Natural killer cell (primary cell): ENCODE measurements at regions of chr14 and their contacts with region 1.

Region 1: DNA sequence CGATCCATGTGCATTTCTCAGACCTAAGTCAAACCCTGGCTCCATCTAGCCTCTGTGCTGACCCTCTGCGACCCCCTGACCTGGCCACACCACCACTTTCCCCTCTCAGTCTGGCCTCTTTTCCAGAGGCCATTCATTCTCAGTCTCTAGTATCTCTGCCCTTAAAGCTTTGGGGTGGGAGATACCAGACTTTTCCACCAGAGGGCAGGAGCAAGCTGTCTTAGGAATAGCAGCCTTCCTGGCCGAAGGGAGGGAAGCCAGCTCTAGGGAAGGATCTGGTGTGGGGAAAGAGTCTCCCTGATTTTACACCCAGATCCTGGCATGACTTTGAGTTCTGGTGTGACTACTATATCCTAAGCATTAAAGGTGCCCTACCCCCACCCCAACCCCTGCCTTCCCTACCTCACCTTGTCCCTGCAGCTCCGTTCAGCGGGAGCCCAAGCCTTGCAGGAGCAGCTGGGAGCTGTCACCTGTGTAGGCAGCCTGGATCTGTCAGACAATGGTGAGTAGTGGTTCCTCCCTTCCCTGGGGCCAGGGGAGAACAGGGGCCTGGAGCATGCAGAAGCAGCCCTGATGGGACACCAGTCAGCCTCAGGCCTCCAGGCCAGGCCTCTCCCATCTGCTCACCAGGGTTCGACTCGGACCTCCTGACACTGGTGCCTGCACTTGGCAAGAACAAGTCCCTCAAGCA is 6.6 kb downstream of the CARMIL3 start:
- DNase-seq: peak; percentile 27 to 54
- ATAC-seq: peak in 2 of 3 donors; percentile 70 to 73
- H3K4me3 ChIP-seq: no peak overlapping the region
- H3K4me3 Mint-ChIP-seq: no peak overlapping the region
- H3K27ac ChIP-seq: no peak overlapping the region
- H3K27ac Mint-ChIP-seq: peak overlapping the region in 1 of 2 donors; percentile 83
- H3K4me1 ChIP-seq: peaks cover 8% of the 10 kb centered on the region
- H3K4me1 Mint-ChIP-seq: peaks cover 2 to 30% of the 10 kb centered on the region in 2 donors
- H3K27me3 ChIP-seq: no peaks in the 10 kb centered on the region
- H3K27me3 Mint-ChIP-seq: peaks cover 0 to 2% of the 10 kb centered on the region in 2 donors
- CTCF ChIP-seq: peak; percentile 71

Region 2: DNA sequence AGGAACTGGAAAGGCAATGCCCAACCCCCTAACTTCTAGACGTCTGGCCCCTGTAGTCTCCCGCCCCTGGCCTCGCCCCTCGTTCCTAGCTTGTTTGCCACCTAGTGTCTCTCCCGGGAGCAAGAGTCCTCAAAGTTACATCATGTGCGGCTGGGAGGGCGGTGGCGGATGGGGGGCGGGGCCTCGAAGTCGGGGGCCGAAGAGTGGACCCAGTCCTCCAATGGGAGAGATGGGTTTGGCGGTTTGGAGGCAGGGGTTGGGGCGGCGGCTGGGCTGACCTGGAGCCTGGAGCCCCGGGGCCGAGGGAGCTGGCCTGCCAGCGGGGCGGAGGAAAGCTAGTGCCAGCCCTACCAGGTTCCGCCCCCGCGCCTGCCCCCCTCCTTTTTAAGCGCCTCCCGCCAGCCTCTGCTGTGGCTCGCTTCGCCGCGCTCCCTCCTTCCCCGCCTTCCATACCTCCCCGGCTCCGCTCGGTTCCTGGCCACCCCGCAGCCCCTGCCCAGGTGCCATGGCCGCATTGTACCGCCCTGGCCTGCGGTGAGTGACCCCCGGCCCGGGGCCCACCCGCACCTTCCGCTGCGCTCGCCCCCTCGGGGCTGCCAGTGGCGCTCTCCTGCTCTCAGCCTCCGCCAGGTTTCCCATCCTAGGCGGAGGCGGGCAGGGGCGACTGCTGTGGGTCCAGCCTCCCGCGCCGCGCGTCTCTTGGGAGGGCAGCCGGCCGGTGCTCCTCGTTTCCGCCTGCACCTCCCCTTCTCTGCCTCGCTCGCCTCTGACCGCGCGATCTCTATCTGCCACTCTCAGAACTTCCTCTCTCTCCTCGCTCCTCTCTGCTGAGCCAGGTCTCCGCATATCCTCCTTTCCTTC is 35.7 kb after region 1 on chr14 and contains the start of gene PCK2:
- intact Hi-C with region 1: loop called (anchors 1 kb)
- DNase-seq: peak; percentile 62 to 77
- ATAC-seq: peak; percentile 79 to 82 (median 79)
- H3K4me3 ChIP-seq: peak within 1 kb of the TSS; percentile 78
- H3K4me3 Mint-ChIP-seq: peak within 1 kb of the TSS; percentile 98
- H3K27ac ChIP-seq: peak within 1 kb of the TSS; percentile 90
- H3K27ac Mint-ChIP-seq: peak within 1 kb of the TSS; percentile 89 to 96
- H3K4me1 ChIP-seq: peaks cover 28% of the 10 kb centered on the region
- H3K4me1 Mint-ChIP-seq: peaks cover 20 to 38% of the 10 kb centered on the region in 2 donors
- H3K27me3 ChIP-seq: no peaks in the 10 kb centered on the region
- H3K27me3 Mint-ChIP-seq: no peaks in the 10 kb centered on the region
- CTCF ChIP-seq: no peak
- total RNA-seq, gene PCK2: 9.8 to 13.8 (median 12.3) TPM

Region 3: DNA sequence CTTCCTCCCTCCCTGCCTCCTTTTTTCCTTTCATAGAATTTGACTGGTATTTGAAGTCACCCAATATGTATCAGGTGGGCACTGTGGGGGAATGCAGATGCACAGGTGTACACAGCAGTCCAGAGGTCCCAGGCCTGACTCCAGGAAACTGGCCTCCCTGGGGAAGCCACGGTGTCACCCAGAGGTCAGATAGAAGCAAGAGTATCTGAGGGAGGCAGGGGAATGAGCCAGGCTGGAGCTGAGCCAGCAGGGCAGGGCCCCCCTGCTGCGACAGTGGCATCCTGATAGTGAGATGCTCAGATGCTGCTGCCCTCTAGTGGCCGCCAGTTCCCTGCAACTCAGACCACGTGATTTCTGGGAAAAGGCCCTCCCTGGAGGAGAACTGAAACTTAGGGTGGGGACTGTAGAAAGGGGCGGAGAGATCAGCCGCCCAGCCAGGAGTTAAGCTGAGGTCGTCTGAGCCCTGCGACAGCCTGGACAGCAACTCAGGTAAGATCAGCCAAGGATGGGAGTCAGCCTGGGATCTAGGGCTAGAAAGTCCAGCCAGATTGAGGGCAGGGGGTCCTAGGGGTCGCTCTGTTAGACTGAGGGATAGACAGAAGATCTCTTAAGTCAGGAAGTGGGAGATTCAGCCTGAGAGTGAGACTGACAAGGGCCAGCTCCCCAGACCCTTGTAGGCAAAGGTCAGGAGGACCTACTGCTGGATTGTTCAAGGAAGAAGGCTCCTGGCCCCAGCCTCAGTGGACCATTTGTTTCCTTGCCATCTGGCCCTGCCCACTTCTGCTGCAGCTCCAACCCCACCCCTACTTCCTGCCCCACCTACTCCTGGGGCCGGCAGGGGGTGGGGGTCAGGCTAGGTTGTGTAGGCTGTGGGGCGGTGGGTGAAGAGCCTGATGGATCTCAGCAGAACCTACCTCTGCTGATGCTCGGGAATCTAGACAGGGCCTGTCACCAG is 102.7 kb after region 1 on chr14 and contains the start of gene IRF9:
- intact Hi-C with region 1: loop called (anchors 2 kb)
- DNase-seq: peak; percentile 93 to 99
- ATAC-seq: peak; percentile 91 to 97 (median 91)
- H3K4me3 ChIP-seq: peak within 1 kb of the TSS; percentile 94
- H3K4me3 Mint-ChIP-seq: peak within 1 kb of the TSS; percentile 99
- H3K27ac ChIP-seq: peak within 1 kb of the TSS; percentile 94
- H3K27ac Mint-ChIP-seq: peak within 1 kb of the TSS; percentile 97
- H3K4me1 ChIP-seq: peaks cover 37% of the 10 kb centered on the region
- H3K4me1 Mint-ChIP-seq: peaks cover 43 to 54% of the 10 kb centered on the region in 2 donors
- H3K27me3 ChIP-seq: no peaks in the 10 kb centered on the region
- H3K27me3 Mint-ChIP-seq: no peaks in the 10 kb centered on the region
- CTCF ChIP-seq: peak; percentile 85
- total RNA-seq, gene IRF9: 178 to 348 (median 319) TPM